Posterior cingulate gyrus (tissue), 11 donors: ENCODE measurements at regions of chr7 and their contacts with region 1.

Region 1: DNA sequence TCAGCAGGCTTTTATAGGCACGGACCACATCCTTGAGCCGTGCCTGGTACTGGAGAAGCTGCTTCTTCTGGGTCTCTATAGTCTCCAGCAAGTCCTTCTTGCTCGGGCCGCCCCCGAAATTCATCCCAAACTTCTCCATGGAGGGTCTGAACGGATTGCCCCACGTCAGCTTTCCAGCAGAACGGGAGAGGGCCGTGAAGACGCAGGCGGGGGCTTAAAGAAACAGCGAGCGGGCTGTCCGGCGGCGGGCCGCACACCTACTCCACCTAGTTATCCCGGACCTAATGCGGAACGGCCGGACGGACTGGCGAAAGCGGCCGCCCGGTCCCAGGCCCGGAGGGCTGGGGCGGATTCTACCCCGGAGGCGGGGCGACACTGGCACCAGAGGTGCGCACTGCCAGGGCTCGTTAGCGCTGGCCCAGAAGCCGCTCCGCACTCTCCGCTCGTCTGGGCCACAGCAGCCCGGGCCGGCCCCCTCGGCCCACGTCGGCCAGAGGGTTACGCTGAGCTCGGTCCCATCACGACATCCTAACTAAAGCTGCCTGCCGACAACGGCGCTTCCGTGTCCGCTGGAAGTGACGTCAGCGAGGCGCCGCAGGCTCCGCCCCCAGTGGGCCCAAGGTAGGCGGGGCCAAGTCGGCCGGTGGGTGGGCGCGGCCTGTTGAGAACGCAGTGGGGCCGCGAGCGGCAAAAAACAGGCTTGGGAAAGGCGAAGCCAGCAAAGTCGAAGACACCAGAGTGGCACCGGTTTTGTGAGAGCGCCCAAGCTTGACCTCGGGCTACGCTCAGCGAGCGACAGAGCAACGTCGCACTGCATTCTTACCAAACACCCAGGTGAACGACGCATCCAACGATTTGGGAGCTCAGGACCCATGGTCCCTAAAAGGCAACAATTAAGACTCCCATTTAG is at the start of gene GCC1:
- DNase-seq: peak; percentile 90 to 99 (median 94)

Region 2: GRCh38 chr7:127651556-127652332 is 66.4 kb after region 1 on chr7 and contains the start of gene SND1:
- intact Hi-C with region 1: loop called (anchors 2 kb)
- DNase-seq: peak; percentile 98 to 100 (median 99)